ENCODE measurements at regions of chr3 and their contacts with region 1.

Region 1: GRCh38 chr3:138923531-138923994 is 23.4 kb downstream of the FOXL2 start:
- DNase-seq: peak; percentile 93
- H3K4me3 Mint-ChIP-seq: no peak overlapping the region
- H3K27ac Mint-ChIP-seq: peak overlapping the region; percentile 15
- H3K4me1 Mint-ChIP-seq: peaks cover 17% of the 10 kb centered on the region
- H3K27me3 Mint-ChIP-seq: no peaks in the 10 kb centered on the region
- CTCF ChIP-seq: peak; percentile 79

Region 2: GRCh38 chr3:138329127-138329983 is 594.2 kb before region 1 on chr3 and contains the start of gene NME9:
- CTCF ChIA-PET with region 1: interaction called, 4 read pairs
- POLR2A ChIA-PET with region 1: no interaction called
- intact Hi-C with region 1: loop called (anchors 2 kb)
- DNase-seq: peak; percentile 76
- H3K4me3 Mint-ChIP-seq: peak within 1 kb of the TSS; percentile 69
- H3K27ac Mint-ChIP-seq: peak within 1 kb of the TSS; percentile 13
- H3K4me1 Mint-ChIP-seq: peaks cover 8% of the 10 kb centered on the region
- H3K27me3 Mint-ChIP-seq: no peaks in the 10 kb centered on the region
- CTCF ChIP-seq: peak; percentile 37
- total RNA-seq, gene NME9: not detected in 2 replicates

Region 3: DNA sequence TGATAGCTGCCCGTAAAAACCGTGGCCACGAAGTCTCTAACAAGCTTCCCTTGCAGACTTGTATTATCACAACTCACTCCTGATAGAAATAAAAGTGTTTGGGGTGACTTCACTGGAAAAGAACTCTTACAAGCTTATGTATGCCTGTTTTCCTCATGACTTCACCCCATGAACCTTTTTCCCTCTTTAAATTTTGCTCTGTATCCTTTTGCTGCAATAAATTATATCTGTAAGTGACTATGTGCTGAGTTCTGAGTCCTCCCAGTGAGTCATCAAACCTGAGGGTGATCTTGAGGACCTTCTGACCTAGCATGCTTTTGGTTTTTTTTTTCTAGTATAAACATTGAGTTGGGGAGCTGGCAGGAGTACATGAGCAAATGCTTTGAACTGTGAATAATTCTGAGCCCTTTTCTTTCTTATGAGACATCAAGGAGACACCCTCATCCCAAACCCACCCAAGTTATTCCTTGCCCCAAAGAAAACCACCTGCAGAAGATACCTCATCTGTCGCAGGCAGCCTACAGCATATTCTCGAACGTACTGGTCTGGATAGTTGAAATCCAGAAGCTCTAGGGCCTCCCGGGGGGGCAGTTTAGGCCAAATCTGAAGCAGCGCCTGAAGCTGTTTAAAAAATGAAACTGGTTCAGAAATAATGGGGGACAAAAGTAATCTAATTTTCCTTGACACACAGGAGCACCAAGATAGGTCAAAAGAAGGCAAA is 229.1 kb before region 1 on chr3:
- CTCF ChIA-PET with region 1: interaction called, 44 read pairs
- POLR2A ChIA-PET with region 1: interaction called, 4 read pairs
- intact Hi-C with region 1: no loop called
- DNase-seq: peak; percentile 80
- H3K4me3 Mint-ChIP-seq: peak overlapping the region; percentile 2
- H3K27ac Mint-ChIP-seq: peak overlapping the region; percentile 43
- H3K4me1 Mint-ChIP-seq: peaks cover 8% of the 10 kb centered on the region
- H3K27me3 Mint-ChIP-seq: no peaks in the 10 kb centered on the region
- CTCF ChIP-seq: no peak

Region 4: DNA sequence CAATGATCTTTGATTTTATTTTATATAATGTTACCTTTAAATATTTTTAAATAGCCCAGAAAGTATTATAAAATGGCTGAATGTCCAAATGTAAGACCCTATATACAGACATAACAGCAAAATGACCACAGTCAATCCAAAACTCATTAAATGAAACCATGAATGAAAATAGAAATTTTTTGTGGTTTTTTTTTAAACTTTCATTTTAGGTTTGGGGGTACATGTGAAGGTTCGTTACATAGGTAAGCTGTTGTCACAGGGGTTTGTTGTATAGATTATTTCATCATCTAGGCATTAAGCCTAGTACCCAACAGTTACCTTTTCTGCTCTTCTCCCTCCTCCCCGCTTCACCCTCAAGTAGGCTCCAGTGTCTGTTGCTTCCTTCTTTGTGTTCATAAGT is 206.2 kb before region 1 on chr3:
- CTCF ChIA-PET with region 1: interaction called, 10 read pairs
- POLR2A ChIA-PET with region 1: no interaction called
- intact Hi-C with region 1: no loop called
- DNase-seq: no peak
- H3K4me3 Mint-ChIP-seq: no peak overlapping the region
- H3K27ac Mint-ChIP-seq: no peak overlapping the region
- H3K4me1 Mint-ChIP-seq: no peaks in the 10 kb centered on the region
- H3K27me3 Mint-ChIP-seq: no peaks in the 10 kb centered on the region
- CTCF ChIP-seq: no peak

Region 5: DNA sequence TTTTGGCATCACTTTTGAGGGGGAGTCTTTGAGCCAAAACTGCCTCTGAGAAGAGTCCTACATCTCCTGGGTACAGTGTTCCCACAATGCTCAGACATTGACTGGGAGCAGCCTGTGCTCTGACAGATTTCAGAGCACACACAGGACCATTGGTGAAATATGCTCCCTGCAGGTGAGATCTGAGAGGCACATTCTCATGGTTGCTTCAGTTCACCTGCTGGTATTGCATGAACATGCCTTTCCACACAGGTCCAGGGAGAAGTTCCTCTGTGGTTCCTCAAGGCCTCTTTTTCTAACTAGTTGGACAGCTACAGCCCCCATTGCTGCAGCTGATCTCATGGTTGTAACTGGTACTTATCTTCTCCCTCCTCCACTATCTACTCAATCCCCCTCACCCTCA is 13.7 kb before region 1 on chr3:
- CTCF ChIA-PET with region 1: interaction called, 26 read pairs
- POLR2A ChIA-PET with region 1: no interaction called
- intact Hi-C with region 1: no loop called
- DNase-seq: no peak
- H3K4me3 Mint-ChIP-seq: no peak overlapping the region
- H3K27ac Mint-ChIP-seq: no peak overlapping the region
- H3K4me1 Mint-ChIP-seq: peaks cover 3% of the 10 kb centered on the region
- H3K27me3 Mint-ChIP-seq: no peaks in the 10 kb centered on the region
- CTCF ChIP-seq: no peak

Region 6: GRCh38 chr3:139329345-139329850 is 405.8 kb after region 1 on chr3:
- CTCF ChIA-PET with region 1: interaction called, 10 read pairs
- POLR2A ChIA-PET with region 1: no interaction called
- intact Hi-C with region 1: no loop called
- DNase-seq: peak; percentile 87
- H3K4me3 Mint-ChIP-seq: no peak overlapping the region
- H3K27ac Mint-ChIP-seq: no peak overlapping the region
- H3K4me1 Mint-ChIP-seq: peaks cover 8% of the 10 kb centered on the region
- H3K27me3 Mint-ChIP-seq: peaks cover 41% of the 10 kb centered on the region
- CTCF ChIP-seq: peak; percentile 99

Measured in MCF 10A (cell line).